ENCODE measurements at regions of chr7 and their contacts with region 1.

Region 1: DNA sequence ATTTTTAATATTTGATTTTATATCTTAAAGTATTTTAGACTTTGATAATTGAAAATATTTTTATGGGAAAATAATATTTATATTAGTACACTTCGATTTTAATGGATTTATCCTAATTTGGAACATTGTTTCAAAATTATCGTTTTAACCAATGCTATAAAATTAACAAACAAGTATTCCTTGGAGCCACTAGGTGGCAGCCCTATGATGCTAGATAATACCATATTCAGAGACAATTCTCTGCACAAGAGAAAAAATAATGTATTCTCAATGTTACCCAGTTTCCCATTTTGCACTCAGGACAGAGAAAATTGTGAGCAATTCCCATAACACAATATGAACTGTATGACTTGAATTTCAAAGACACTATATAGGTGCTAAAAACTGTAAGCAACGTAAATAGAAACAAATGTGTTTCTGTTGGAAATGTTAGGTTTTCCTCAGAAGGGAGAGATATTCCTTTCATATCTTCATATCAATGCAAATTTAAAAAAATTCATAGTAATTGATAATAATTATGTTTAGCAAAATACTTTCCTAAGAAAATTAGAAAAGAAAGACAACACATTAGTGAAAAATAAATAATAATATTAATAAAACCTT is 237.8 kb downstream of the SEMA3E start:
- DNase-seq: peak; percentile 61
- ATAC-seq: peak; percentile 62; the same call in 1 of the 2 replicates
- H3K4me3 ChIP-seq: no peak overlapping the region
- H3K27ac ChIP-seq: no peak overlapping the region; the same call in 1 of the 2 replicates
- H3K4me1 ChIP-seq: no peaks in the 10 kb centered on the region
- H3K27me3 ChIP-seq: no peaks in the 10 kb centered on the region
- CTCF ChIP-seq: peak; percentile 68; the same call in 1 of the 2 replicates

Region 2: GRCh38 chr7:83514977-83515376 is 103.9 kb after region 1 on chr7:
- CTCF ChIA-PET with region 1: no interaction called
- POLR2A ChIA-PET with region 1: no interaction called
- in situ Hi-C with region 1: no loop called
- intact Hi-C with region 1: loop called (anchors 5 kb)
- DNase-seq: no peak
- ATAC-seq: no peak
- H3K4me3 ChIP-seq: no peak overlapping the region
- H3K27ac ChIP-seq: no peak overlapping the region
- H3K4me1 ChIP-seq: no peaks in the 10 kb centered on the region
- H3K27me3 ChIP-seq: no peaks in the 10 kb centered on the region
- CTCF ChIP-seq: no peak

Region 3: GRCh38 chr7:83655951-83656556 is 245.0 kb after region 1 on chr7:
- CTCF ChIA-PET with region 1: no interaction called
- POLR2A ChIA-PET with region 1: no interaction called
- in situ Hi-C with region 1: no loop called
- intact Hi-C with region 1: loop called (anchors 1 kb)
- DNase-seq: peak; percentile 72
- ATAC-seq: no peak
- H3K4me3 ChIP-seq: no peak overlapping the region
- H3K27ac ChIP-seq: no peak overlapping the region
- H3K4me1 ChIP-seq: no peaks in the 10 kb centered on the region
- H3K27me3 ChIP-seq: no peaks in the 10 kb centered on the region; the same call in 1 of the 2 replicates
- CTCF ChIP-seq: peak; percentile 87; the same call in 1 of the 2 replicates